Left cardiac atrium (tissue), 4 donors: ENCODE measurements at regions of chr1 and their contacts with region 1.

Region 1: DNA sequence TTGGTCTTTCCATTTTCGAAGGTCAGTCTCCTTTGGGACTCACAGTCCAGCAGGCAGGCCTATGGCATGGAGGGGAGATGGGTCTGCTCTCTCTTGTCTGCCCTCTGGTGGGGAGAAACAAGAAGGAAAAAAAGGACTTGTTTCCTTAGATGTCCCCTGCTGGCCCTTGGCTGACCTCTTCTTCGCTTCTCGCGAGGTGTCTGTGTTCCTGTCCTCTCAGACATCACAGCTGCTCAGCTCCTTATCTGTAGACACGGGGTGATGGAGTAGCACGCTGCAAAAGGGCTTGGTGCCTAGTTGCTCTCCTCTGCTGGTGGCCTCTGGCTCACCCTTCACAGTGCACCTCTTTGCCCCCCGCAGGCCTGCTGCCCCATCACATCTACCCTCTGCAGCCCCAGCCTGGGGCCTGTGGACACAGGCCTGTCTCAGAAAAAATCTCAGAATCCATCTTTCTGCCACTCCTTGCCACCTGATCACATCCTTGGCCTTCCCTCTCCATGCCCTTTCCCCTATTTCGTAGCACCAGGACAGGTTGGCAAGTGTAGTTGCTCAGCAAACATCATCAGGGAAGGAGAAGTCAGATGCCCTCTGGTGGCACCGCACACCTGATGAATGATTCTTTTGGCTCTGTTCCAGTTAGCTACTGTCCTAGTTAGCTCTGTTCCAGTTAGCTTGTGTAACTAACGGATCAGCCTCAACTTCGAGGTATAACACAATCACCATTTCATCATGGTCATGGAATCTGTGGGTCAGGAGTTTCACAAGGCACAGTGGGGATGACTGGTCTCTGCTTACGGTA is 18.7 kb upstream of the AK2 start:
- DNase-seq: peak; percentile 86
- ATAC-seq: peak; percentile 89 to 97

Region 2: DNA sequence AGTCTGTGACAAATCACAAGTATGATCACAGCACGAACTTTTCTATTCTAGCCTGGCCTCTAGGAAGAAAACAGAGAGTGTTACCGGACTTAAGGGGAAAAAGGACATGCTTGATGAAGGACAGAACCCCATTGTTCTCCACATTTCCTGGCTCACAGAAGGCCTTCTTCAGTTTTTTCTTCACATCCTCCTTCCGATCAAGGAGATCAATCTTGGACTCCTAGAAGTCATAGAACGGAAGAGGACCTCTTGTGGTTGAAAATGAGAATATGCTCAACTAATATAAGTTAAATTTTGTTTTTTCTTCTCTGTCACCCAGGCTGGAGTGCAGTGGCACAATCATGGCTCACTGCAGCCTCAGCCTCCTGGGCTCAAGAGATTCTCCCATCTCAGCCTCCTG is 268.6 kb before region 1 on chr1:
- intact Hi-C with region 1: no loop called
- DNase-seq: no peak
- ATAC-seq: no peak

Region 3: DNA sequence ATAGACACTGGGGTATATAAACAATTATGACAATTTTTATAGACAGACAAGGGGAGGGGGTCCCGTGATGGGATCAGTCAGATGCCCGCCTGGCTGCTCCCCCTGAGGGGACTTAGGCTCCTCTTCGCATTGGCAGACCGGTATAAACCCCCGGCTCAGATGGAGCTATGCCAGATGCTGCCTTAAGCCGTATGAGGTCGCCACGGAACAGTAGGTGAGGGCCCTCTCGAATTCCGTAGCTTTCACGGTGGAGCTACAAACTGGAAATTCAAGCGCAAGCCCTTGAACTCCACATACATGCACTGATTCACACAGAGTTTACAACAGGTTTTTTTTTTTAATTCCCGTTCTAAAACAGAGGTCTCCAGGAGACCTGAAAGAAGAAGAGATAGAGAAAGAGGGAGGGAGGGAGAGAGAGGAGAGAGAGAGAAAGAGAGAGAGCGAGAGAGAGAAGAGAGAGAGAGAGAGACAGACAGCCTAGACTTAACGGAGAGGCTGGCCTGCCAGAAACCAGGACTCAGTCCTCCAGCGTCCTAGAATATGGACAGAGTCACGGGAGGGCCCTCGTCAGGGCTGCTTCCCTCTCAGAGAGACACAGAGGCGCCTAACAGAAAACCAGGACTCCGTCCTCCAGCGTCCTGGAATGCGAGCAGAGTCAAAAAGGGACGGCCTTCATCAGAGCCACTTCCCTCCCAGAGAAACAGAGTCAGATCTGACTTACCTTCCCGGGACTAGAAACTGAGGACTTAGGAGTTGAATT is 129.8 kb before region 1 on chr1:
- intact Hi-C with region 1: loop called in 1 of 2 experiments (anchors 10 kb)
- DNase-seq: peak; percentile 36
- ATAC-seq: peak; percentile 35 to 69

Region 4: GRCh38 chr1:32933742-32934322 is 121.6 kb before region 1 on chr1:
- intact Hi-C with region 1: loop called (anchors 1 to 10 kb)
- DNase-seq: no peak
- ATAC-seq: peak; percentile 31 to 48